Posterior vena cava (tissue), 2 donors: ENCODE measurements at regions of chr21 and their contacts with region 1.

Region 1: DNA sequence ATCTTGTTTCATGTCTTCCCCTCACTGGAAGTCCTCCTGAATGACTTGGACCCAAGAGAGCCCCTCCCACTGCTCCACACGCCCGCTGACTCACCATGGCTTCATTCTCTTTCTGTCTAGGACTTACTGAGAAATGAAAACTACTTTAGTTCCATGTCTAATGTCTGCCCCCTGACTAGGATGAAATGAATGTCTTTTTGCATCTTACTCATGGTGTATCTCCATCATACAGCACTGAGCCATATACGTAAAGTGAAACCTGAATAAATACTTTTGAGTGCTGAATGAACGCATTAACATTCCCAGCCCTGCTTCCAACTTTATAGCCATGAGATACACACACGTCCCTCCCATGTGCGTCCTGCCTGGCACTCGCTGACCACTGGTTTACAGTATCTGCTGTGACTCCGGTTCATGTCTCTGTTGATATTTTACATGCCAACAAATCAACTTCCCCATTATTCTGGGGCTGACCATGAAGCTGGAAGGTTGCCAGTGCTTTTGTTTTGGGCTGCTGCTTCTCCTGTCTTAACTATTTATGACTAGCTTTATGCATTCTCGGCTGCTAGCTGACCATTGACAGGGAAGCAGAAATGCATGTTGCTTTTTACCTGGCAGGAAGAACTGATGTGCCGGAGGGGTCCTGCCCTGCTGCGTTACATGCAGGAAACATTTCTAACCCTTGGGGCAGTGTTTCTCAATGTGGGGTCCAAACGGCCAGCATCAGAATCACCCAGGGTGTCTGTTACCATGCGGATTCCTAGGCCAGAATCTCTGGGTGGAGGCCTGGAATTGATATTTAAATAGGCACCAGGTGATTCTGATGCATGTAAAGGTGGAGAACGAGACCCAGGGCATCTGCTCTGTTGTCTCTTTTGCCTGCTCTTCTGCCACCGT is 182.4 kb downstream of the PCP4 start:
- DNase-seq: no peak

Region 2: DNA sequence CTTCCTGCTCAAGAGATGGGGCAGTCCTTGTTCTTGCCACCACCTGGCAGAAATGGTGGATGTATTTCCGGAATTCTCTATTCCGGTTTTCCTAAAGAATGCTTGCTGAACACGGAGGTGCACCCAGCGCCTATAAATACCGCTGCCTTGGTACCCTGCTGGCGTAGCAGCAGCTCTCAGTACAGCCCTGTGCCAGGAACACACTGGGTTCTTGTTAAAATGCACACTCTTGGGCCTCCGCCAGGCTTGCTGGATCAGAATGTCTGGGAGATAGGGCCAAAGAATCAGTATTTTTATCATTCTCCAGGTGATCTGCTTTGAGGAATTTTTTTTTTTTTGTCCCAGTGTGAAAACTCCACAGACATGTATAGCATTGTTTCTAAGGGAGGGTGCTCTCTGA is 250.5 kb before region 1 on chr21:
- intact Hi-C with region 1: loop called in 1 of 2 experiments (anchors 10 kb)
- DNase-seq: no peak

Region 3: DNA sequence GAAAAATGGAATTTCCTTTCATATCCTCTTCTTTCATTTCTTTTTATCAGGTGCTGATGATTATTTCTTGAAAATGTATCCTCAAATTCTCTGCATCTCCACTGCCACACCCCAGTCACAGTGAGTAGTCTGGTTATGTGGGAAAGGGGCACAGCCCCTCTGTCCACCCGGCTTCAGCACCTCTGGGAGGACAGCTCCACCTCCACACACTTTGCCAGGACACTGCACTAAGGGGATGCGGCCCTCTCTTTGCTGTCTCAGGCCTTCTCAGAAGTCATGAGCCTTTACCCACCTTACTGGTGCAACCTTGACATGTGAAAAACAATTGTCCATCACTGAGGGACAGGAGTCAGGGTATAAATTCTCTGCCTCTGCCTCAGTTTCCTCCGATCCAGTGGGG is 250.7 kb after region 1 on chr21:
- intact Hi-C with region 1: no loop called
- DNase-seq: no peak

Region 4: DNA sequence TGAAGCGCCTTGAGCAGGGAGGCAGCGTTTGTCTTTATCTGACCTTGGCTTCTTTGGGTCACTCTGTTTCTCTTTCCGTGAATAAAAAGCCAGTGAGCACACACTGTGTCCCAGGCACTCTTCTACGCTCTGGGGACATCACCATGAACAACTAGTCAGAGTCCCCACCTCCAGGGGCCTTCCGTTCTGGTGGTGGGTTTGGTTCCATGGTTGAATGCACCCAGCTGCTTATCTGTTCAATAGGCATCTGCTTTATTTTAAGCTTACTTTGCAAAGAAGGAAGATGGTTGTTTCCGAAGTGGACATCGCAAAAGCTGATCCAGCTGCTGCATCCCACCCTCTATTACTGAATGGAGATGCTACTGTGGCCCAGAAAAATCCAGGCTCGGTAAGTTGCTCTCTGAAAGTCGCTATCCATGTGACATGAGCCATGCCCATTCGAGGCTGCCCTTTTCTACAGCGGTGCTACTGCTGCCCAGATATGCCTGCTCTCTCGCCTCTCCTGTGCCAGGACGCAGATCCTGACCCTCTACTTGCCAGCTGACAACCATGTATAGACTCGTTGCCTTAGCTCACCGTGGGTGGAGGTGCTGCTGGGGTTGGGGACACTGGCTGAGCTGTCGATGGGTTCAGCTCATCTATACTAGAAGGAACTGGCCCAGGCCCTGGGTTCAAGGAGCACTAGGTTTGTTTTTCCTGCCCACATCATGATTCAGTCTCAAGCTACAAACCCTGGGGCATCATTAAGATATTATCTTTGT is 1382.3 kb after region 1 on chr21:
- intact Hi-C with region 1: loop called in 1 of 2 experiments (anchors 10 kb)
- DNase-seq: peak; percentile 52